Caco-2 (cell line): ENCODE measurements at regions of chr4 and their contacts with region 1.

Region 1: DNA sequence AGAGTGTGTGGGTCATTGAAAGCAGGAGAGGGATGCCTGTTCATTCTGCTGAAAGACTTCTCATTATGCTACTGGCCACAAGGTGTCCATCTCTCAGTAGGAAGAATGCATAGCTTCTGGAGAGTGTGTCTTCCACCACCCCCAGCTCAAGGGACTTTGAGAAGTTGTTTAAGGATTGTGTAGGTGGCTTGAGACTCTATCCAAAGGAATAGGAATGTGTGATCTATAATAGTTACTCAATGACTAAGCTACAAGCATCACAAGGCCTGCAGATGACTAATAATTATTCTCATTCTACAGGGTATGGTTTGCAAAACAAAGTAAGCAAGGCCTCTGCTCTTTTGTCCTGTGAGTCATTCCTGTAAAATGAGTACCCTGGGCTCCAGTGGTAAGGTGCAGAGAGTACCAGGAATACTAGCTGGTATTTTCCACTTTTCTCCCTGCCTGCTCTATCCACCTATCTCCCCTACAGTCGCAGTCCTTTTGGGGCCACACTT is 279.8 kb upstream of the BOD1L1 start:
- DNase-seq: peak; percentile 48 to 60
- H3K4me3 ChIP-seq: no peak overlapping the region
- H3K4me3 Mint-ChIP-seq: no peak overlapping the region
- H3K27ac Mint-ChIP-seq: peak overlapping the region; percentile 48
- H3K4me1 ChIP-seq: peaks cover 27% of the 10 kb centered on the region
- H3K4me1 Mint-ChIP-seq: peaks cover 16% of the 10 kb centered on the region
- H3K27me3 ChIP-seq: no peaks in the 10 kb centered on the region
- H3K27me3 Mint-ChIP-seq: no peaks in the 10 kb centered on the region
- CTCF ChIP-seq: peak; percentile 27 to 32

Region 2: GRCh38 chr4:13527981-13528820 is 379.1 kb before region 1 on chr4:
- CTCF ChIA-PET with region 1: no interaction called
- POLR2A ChIA-PET with region 1: no interaction called
- intact Hi-C with region 1: no loop called
- DNase-seq: no peak
- H3K4me3 ChIP-seq: no peak overlapping the region
- H3K4me3 Mint-ChIP-seq: no peak overlapping the region
- H3K27ac Mint-ChIP-seq: no peak overlapping the region
- H3K4me1 ChIP-seq: no peaks in the 10 kb centered on the region
- H3K4me1 Mint-ChIP-seq: no peaks in the 10 kb centered on the region
- H3K27me3 ChIP-seq: no peaks in the 10 kb centered on the region
- H3K27me3 Mint-ChIP-seq: no peaks in the 10 kb centered on the region
- CTCF ChIP-seq: no peak

Region 3: DNA sequence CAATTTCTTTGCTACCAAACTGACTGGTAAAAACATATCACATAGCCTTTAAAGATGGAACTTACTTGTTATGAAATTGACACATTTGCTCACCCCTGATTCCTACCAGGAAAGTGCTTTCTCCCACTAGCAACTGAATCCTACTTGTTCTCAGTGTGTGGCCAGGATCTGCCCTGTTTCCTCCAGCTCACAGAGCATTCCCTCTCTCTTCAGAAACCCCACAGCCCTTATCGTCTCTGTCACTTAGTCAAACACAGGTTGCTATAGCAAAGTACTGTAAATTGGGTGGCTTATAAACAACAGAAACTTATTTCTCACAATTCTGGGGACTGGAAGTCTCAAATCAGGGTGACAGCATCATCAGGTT is 14.6 kb before region 1 on chr4:
- CTCF ChIA-PET with region 1: interaction called, 4 read pairs
- POLR2A ChIA-PET with region 1: no interaction called
- intact Hi-C with region 1: loop called (anchors 1 kb)
- DNase-seq: no peak
- H3K4me3 ChIP-seq: no peak overlapping the region
- H3K4me3 Mint-ChIP-seq: peak overlapping the region; percentile 36
- H3K27ac Mint-ChIP-seq: peak overlapping the region; percentile 92
- H3K4me1 ChIP-seq: peaks cover 22% of the 10 kb centered on the region
- H3K4me1 Mint-ChIP-seq: peaks cover 19% of the 10 kb centered on the region
- H3K27me3 ChIP-seq: no peaks in the 10 kb centered on the region
- H3K27me3 Mint-ChIP-seq: no peaks in the 10 kb centered on the region
- CTCF ChIP-seq: no peak

Region 4: DNA sequence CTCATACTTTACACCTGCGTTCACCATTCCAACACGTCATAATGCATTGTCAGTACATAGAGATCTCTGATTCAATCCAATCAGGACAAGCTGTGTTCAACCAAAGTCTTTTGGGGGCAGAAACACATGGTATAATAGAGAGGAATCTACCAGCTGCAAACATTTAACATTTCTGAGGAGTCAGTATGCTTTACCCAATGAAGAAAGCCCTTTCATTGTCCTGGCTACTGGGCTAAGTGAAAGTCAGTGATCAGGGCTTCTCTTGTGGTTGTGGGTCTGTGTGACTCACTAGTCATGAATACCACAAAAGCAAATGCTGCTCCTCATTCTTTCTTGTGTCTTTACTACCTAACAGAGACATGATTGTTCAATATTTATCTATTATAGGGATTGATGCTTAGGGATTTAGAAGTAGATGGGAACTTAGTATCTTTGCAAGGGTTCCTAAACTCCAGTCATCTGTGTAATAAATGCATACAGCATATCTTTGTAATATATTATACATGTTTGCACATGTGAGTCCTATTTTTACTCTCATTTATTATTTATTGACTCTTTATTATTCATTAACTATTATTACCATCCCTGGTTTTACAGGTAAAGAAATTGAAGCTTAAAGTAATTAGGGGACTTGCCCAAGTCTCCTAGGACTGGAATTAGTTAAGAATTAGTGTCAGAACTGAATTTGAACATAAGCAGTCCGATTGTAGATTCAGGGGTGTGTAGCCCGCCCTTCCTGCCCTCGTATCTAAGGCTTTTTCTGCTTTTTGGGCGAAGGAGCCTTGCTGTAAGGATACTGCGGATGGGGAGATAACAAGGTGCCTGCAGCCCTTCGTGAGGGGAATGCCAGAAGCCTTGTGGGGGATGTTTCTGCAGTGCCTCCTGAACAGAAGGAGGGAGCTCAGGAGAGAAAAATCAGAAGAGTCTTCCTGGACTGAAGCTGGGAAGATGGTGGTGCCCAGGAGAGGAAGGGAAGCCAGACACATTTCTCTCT is 73.3 kb after region 1 on chr4:
- CTCF ChIA-PET with region 1: no interaction called
- POLR2A ChIA-PET with region 1: no interaction called
- intact Hi-C with region 1: loop called (anchors 2 kb)
- DNase-seq: peak; percentile 7 to 42
- H3K4me3 ChIP-seq: no peak overlapping the region
- H3K4me3 Mint-ChIP-seq: no peak overlapping the region
- H3K27ac Mint-ChIP-seq: no peak overlapping the region
- H3K4me1 ChIP-seq: peaks cover 4% of the 10 kb centered on the region; the same call in 1 of the 2 replicates
- H3K4me1 Mint-ChIP-seq: peaks cover 7% of the 10 kb centered on the region
- H3K27me3 ChIP-seq: no peaks in the 10 kb centered on the region
- H3K27me3 Mint-ChIP-seq: no peaks in the 10 kb centered on the region
- CTCF ChIP-seq: no peak

Region 5: GRCh38 chr4:14184265-14184664 is 277.0 kb after region 1 on chr4:
- CTCF ChIA-PET with region 1: interaction called, 3 read pairs
- POLR2A ChIA-PET with region 1: no interaction called
- intact Hi-C with region 1: loop called (anchors 10 kb)
- DNase-seq: no peak
- H3K4me3 ChIP-seq: no peak overlapping the region
- H3K4me3 Mint-ChIP-seq: no peak overlapping the region
- H3K27ac Mint-ChIP-seq: no peak overlapping the region
- H3K4me1 ChIP-seq: peaks cover 32% of the 10 kb centered on the region
- H3K4me1 Mint-ChIP-seq: peaks cover 9% of the 10 kb centered on the region
- H3K27me3 ChIP-seq: no peaks in the 10 kb centered on the region
- H3K27me3 Mint-ChIP-seq: no peaks in the 10 kb centered on the region
- CTCF ChIP-seq: no peak

Region 6: GRCh38 chr4:14743601-14744000 is 836.3 kb after region 1 on chr4:
- CTCF ChIA-PET with region 1: no interaction called
- POLR2A ChIA-PET with region 1: no interaction called
- intact Hi-C with region 1: no loop called
- DNase-seq: no peak
- H3K4me3 ChIP-seq: no peak overlapping the region
- H3K4me3 Mint-ChIP-seq: no peak overlapping the region
- H3K27ac Mint-ChIP-seq: no peak overlapping the region
- H3K4me1 ChIP-seq: no peaks in the 10 kb centered on the region
- H3K4me1 Mint-ChIP-seq: no peaks in the 10 kb centered on the region
- H3K27me3 ChIP-seq: no peaks in the 10 kb centered on the region
- H3K27me3 Mint-ChIP-seq: no peaks in the 10 kb centered on the region
- CTCF ChIP-seq: no peak